ENCODE measurements at regions of chr18 and their contacts with region 1.

Region 1: GRCh38 chr18:11937874-11938478 is 29.9 kb upstream of the MPPE1 start:
- DNase-seq: peak; percentile 81 to 89 (median 86)
- ATAC-seq: peak; percentile 96
- H3K4me3 ChIP-seq: no peak overlapping the region
- H3K27ac ChIP-seq: peak overlapping the region in 2 of 4 donors; percentile 2 to 47
- H3K4me1 ChIP-seq: no peaks in the 10 kb centered on the region
- H3K27me3 ChIP-seq: no peaks in the 10 kb centered on the region
- CTCF ChIP-seq: peak; percentile 57 to 90 (median 82)
- POLR2A ChIP-seq: no peak

Region 2: GRCh38 chr18:11741505-11742145 is 196.4 kb before region 1 on chr18:
- intact Hi-C with region 1: no loop called
- DNase-seq: no peak
- ATAC-seq: peak; percentile 35
- H3K4me3 ChIP-seq: no peak overlapping the region
- H3K27ac ChIP-seq: no peak overlapping the region
- H3K4me1 ChIP-seq: no peaks in the 10 kb centered on the region
- H3K27me3 ChIP-seq: no peaks in the 10 kb centered on the region
- CTCF ChIP-seq: peak in 6 of 7 experiments; percentile 31 to 44 (median 38)
- POLR2A ChIP-seq: no peak

Region 3: GRCh38 chr18:12049978-12050811 is 112.2 kb after region 1 on chr18:
- intact Hi-C with region 1: loop called (anchors 10 kb)
- DNase-seq: no peak
- ATAC-seq: no peak
- H3K4me3 ChIP-seq: no peak overlapping the region
- H3K27ac ChIP-seq: no peak overlapping the region
- H3K4me1 ChIP-seq: peaks cover 6% of the 10 kb centered on the region
- H3K27me3 ChIP-seq: no peaks in the 10 kb centered on the region
- CTCF ChIP-seq: no peak
- POLR2A ChIP-seq: no peak

Measured in body of pancreas (tissue), 4 donors.